A549 (cell line): ENCODE measurements at regions of chr10 and their contacts with region 1.

Region 1: GRCh38 chr10:69885379-69886013 is 83.8 kb downstream of the COL13A1 start:
- DNase-seq: peak in 1 of 2 experiments; percentile 68
- ATAC-seq: peak in 1 of 2 experiments; percentile 76; a peak in 3 of 6 replicates
- H3K4me3 ChIP-seq: no peak overlapping the region
- H3K27ac ChIP-seq: no peak overlapping the region
- H3K4me1 ChIP-seq: no peaks in the 10 kb centered on the region
- CTCF ChIP-seq: 0 out of 3 replicates have a peak, but pooled peaks have one; percentile 4
- EP300 ChIP-seq: no peak
- POLR2A ChIP-seq: no peak
- RAD21 ChIP-seq: no peak

Region 2: GRCh38 chr10:69817078-69817581 is 68.4 kb before region 1 on chr10:
- CTCF ChIA-PET with region 1: no interaction called
- POLR2A ChIA-PET with region 1: no interaction called
- DNase-seq: no peak
- ATAC-seq: no peak
- H3K4me3 ChIP-seq: no peak overlapping the region
- H3K27ac ChIP-seq: no peak overlapping the region
- H3K4me1 ChIP-seq: no peaks in the 10 kb centered on the region
- CTCF ChIP-seq: no peak
- EP300 ChIP-seq: no peak
- POLR2A ChIP-seq: no peak
- RAD21 ChIP-seq: no peak

Region 3: DNA sequence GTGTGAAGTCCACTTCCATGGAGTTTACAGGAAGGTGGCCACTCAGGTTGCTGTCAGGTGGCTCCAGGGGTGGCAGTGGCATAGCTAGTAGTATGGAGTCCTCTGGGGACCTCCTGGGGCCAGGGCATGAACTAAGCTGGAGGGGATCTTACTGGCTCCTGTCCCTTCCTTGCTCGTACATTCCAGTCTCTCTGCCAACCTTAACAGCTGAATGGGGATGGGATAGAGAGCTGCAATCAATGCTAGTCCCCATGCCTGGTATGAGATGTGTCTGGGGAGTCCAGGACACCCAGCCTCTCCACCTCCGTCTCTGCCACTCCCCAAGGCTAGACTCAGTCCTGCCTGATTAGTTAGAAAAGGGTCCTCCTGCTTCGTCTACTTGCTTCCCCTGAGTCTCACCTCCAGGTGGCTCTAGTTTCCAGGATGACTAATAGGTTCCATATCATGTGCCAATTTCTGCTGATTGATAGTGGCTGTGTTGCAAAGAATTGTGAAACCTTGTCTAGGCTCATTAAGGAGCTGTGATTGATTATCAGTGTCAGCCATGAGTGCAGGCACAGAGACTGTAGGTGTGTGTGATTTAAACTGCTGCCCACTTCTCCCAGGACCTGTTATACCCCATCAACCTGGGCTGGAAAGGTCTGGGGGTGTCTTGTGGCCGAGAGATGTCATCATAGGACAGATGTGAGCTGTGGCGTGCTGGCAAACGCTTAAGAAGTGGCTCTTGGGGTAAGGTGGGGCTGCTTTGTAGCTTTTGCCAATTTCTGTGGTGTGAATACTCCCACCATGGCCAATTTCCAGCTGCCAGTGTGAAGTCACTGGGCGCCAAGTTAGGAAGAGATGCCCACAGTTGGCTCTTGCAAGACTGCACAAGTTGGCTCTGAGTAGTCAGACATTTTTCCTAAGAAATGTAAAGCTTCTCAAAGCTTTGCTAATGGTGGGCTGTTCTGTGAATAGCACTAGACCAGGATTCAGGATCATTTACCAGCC is 23.9 kb before region 1 on chr10:
- CTCF ChIA-PET with region 1: interaction called, 18 read pairs
- POLR2A ChIA-PET with region 1: no interaction called
- DNase-seq: peak; percentile 40 to 59
- ATAC-seq: peak; percentile 59 to 74; a peak in 5 of 6 replicates
- H3K4me3 ChIP-seq: no peak overlapping the region
- H3K27ac ChIP-seq: peak overlapping the region in 1 of 2 experiments; percentile 87; a peak in 4 of 6 replicates
- H3K4me1 ChIP-seq: peaks cover 39% of the 10 kb centered on the region
- CTCF ChIP-seq: peak; percentile 43
- EP300 ChIP-seq: no peak
- POLR2A ChIP-seq: no peak
- RAD21 ChIP-seq: peak; percentile 30 to 42; a peak in 3 of 5 replicates

Region 4: GRCh38 chr10:69869291-69869961 is 16.1 kb before region 1 on chr10:
- CTCF ChIA-PET with region 1: interaction called, 10 read pairs
- POLR2A ChIA-PET with region 1: no interaction called
- DNase-seq: no peak
- ATAC-seq: peak in 1 of 2 experiments; percentile 36; a peak in 3 of 6 replicates
- H3K4me3 ChIP-seq: no peak overlapping the region
- H3K27ac ChIP-seq: peak overlapping the region in 1 of 2 experiments; percentile 69; a peak in 3 of 6 replicates
- H3K4me1 ChIP-seq: peaks cover 26% of the 10 kb centered on the region
- CTCF ChIP-seq: no peak
- EP300 ChIP-seq: no peak
- POLR2A ChIP-seq: no peak
- RAD21 ChIP-seq: no peak

Region 5: GRCh38 chr10:69896606-69897231 is 11.2 kb after region 1 on chr10:
- CTCF ChIA-PET with region 1: interaction called, 22 read pairs
- POLR2A ChIA-PET with region 1: no interaction called
- DNase-seq: no peak
- ATAC-seq: no peak
- H3K4me3 ChIP-seq: no peak overlapping the region
- H3K27ac ChIP-seq: no peak overlapping the region
- H3K4me1 ChIP-seq: no peaks in the 10 kb centered on the region
- CTCF ChIP-seq: no peak
- EP300 ChIP-seq: no peak
- POLR2A ChIP-seq: no peak
- RAD21 ChIP-seq: no peak

Region 6: DNA sequence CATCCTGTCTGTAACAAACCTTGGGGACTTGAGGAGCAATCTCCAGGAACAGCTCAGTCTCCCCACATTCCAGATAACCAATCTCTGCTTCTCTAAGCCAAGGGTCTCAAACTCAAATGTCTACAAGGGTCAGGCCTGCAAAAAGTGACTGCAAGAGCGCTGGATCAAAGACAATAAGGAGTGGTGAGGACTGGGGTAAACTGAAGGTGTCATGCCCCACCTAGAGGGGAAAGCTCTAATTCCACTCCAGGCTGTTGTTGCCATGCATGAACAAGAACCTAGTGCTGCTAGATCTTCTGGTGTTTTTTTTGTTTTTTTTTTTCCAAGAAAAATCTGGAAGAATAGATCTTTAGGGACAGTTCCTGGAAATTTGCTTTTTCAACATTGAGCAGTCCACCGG is 49.3 kb after region 1 on chr10:
- CTCF ChIA-PET with region 1: no interaction called
- POLR2A ChIA-PET with region 1: no interaction called
- DNase-seq: no peak
- ATAC-seq: peak; percentile 47 to 59; a peak in 3 of 6 replicates
- H3K4me3 ChIP-seq: no peak overlapping the region
- H3K27ac ChIP-seq: no peak overlapping the region
- H3K4me1 ChIP-seq: no peaks in the 10 kb centered on the region
- CTCF ChIP-seq: no peak; the same call in 2 of the 3 replicates
- EP300 ChIP-seq: no peak
- POLR2A ChIP-seq: no peak
- RAD21 ChIP-seq: no peak

Region 7: DNA sequence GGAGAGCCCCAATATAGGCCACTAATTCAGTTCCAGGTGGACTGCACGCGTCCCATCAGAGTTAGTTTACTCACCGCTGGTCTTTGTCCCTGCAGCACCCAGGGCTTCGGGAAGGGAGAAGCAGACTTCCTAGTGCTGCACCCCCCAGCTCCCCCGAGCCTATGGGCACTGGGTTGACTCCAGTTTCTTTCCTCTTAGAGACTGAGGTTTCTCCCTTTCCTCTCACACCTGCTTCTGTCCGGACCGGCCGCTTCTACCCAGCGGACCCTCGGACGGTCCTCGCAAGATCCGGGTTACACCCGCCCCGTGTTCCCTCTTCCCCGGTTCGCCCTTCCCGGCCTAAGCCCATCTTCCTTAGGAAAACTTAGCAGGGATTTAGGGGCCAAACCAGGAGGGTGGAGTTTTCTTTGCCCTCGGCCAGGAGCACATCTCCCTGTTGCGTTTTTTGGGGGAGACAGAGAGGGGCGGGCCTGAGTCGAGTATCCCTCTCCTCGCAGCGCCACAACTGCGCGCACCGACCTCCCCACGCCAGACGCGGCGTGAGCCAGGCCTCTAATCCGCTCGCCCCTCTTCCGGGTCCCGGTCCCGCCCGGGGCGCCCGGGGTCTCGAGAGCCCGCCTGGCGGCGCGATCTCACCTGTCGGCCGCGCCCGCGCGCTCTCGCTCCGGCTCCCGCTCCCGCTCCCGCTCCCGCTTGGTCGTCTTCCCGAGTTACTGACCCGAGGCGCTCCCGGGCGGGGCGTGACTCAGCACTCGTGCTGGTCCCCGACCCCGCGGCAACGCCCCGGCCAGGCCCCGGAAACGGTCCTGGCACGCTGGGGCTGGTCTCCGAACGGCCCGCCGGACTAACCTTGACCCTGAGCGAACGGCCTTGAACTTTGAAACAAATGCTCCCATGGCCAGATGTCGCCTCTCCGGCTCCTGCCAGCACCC is 246.9 kb after region 1 on chr10 and contains the start of gene AIFM2:
- CTCF ChIA-PET with region 1: no interaction called
- POLR2A ChIA-PET with region 1: no interaction called
- DNase-seq: peak; percentile 83 to 92
- ATAC-seq: peak; percentile 74 to 86
- H3K4me3 ChIP-seq: peak within 1 kb of the TSS; percentile 83
- H3K27ac ChIP-seq: peak within 1 kb of the TSS; percentile 92 to 94
- H3K4me1 ChIP-seq: peaks cover 28% of the 10 kb centered on the region
- CTCF ChIP-seq: no peak
- EP300 ChIP-seq: no peak
- POLR2A ChIP-seq: peak; percentile 29
- RAD21 ChIP-seq: no peak
- polyA plus RNA-seq, gene AIFM2: 27.6 and 30.0 TPM in 2 replicates

Region 8: GRCh38 chr10:70308121-70309060 is 422.9 kb after region 1 on chr10:
- CTCF ChIA-PET with region 1: no interaction called
- POLR2A ChIA-PET with region 1: no interaction called
- DNase-seq: no peak
- ATAC-seq: no peak
- H3K4me3 ChIP-seq: no peak overlapping the region
- H3K27ac ChIP-seq: no peak overlapping the region
- H3K4me1 ChIP-seq: no peaks in the 10 kb centered on the region
- CTCF ChIP-seq: no peak
- EP300 ChIP-seq: no peak
- POLR2A ChIP-seq: no peak
- RAD21 ChIP-seq: no peak